Cardiac septum (tissue), 1 donor: ENCODE measurements at regions of chr22 and their contacts with region 1.

Region 1: DNA sequence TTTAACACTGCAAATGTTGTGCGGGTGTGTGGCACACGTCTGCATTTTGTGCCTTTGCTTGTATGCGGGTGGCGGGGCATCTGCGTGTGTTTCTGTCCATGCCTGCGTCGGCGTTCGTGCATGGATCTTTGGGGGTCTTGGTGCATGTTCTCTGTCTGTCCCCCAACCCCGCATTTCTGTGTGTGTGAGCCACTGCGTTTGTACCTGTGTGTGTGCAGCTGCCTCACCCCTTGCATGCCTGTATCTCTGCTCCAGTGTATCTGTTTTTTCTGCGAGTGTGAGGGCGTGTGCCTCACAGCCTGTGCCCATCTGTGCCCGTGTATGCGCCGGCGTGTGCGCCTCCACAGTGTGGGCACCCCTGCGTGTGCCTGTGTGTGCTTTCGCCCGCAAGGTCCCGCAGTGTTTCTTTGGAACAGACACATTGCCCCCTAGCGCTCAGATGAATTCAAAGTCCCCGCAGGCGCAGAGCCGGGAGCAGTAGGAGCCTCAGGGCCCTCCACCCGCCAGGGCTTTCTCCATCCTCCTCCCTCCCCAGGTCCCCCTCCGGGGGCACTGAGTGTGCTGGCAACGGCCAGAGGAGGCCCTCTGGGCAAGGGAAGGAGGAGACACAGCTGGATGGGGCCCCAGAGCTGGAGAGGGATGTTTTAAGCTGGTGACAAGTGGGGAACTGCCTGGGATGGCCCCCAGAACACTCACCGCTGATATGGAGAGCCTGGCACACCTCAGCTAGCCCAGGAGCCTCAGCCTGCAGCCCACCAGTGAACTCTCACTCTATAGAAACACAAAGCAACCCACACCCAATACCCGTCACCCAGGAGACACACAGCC is 3.1 kb upstream of the MN1 start:
- DNase-seq: peak; percentile 80

Region 2: GRCh38 chr22:26672590-26673468 is 1131.9 kb before region 1 on chr22:
- intact Hi-C with region 1: loop called (anchors 10 kb)
- DNase-seq: peak; percentile 96

Region 3: GRCh38 chr22:26756675-26757293 is 1047.9 kb before region 1 on chr22:
- intact Hi-C with region 1: loop called (anchors 2 kb)
- DNase-seq: peak; percentile 78

Region 4: DNA sequence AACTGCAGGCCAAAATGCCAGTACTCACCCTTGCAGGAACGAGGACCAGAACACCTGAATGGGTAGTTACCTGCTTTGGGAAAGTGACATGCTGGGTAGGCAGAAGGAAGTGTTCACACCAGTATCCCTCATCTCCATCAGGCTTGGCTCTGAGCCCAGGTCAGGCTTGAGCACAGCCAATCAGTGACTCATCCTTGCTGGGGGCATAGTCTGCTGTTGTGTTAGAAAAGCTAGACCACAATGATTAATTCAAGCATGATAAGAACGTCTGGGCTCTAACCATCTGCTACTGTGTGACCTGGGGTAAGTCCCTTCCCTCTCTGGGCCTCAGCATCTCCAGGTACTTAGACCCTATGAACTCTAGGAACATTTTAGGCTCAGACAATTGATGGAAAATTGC is 696.9 kb before region 1 on chr22:
- intact Hi-C with region 1: loop called (anchors 10 kb)
- DNase-seq: no peak

Region 5: DNA sequence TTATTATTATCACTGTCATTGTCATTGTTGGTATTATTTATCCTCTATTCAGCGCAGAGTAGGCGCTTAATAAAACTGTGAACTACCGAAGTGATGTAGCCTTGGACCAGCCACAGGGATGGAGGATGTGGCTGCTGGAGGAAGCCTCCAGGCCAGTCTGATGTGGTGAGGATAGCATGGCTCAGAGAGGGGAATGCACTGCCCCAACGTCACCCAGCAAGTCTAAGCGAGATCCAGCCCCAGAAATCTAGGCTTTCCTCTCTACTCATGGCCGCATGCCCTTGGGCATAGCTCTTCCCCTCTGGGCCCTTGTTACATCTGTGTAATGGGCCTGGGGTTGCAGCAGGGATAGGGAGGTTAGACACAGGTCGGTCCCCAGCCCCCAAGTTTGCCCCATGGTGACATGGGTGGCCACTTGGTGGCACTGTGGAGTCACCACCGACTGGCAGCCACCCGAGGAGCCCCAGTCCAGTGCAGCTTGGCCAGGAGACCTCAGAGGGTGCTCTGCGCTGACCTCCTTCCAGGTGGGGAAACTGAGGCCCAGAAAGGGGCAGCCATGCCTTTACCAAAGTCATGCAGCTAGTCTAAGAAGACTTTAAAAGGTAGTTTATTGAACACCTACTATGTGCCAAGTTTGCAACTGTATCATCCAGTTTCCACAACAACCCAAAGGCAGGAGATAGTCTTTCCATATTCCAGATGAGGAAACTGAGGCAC is 398.9 kb before region 1 on chr22:
- intact Hi-C with region 1: loop called (anchors 2 kb)
- DNase-seq: no peak

Region 6: DNA sequence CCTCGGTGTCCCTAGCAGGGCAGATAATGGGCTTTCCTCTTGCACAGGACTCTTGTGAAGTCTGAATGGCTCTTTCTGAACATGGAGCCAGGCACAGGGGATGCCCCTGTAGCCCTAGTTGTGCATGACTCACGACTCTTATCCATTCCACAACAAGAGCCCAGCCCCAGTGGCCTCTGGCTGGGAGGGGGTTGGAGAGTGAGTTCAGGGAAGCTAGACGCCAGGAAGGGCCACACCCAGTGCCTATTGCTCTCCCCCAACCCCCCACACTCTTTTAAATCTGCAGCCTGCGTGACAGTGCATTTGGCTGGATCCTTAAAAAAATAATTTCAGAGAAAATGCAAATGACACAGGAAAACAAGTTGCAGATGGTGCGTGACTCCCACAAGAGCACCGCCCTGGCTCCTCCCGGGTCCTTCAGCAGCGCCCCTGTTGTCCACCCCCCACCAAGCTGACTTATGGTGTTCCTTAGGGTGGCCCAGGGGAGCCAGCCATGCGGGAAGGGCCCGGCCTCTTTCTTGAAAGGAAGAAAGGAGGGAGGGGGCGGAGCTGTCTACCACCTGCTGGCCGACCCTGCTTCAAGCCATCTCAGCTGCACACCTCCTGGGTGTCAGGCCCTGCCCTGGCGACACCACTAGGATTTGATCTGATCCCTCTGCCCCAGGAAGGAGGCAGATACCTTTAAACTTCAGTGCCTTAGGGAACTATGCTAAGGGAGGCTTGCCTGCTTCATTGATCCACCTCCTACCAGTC is 77.8 kb before region 1 on chr22:
- intact Hi-C with region 1: loop called (anchors 2 kb)
- DNase-seq: peak; percentile 84

Region 7: DNA sequence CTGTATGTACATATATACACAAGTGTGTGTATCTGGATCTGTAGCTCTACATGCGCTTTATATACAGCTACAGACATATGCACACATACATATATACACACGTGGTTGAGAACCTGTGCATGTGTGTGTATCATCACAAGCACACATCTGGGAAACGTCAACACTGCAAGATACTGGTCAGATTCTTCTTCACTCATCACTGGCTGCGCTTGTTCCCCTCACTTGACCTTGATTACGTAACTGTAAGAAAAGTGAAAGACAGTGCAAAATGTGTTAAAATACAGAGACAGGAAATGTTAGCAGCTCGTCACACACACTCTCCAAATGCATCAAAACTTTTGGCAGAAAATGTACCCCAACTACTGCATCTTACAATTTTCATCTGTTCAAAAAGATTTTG is 48.7 kb after region 1 on chr22:
- intact Hi-C with region 1: no loop called
- DNase-seq: no peak